A549 (cell line): ENCODE measurements at regions of chr6 and their contacts with region 1.

Region 1: DNA sequence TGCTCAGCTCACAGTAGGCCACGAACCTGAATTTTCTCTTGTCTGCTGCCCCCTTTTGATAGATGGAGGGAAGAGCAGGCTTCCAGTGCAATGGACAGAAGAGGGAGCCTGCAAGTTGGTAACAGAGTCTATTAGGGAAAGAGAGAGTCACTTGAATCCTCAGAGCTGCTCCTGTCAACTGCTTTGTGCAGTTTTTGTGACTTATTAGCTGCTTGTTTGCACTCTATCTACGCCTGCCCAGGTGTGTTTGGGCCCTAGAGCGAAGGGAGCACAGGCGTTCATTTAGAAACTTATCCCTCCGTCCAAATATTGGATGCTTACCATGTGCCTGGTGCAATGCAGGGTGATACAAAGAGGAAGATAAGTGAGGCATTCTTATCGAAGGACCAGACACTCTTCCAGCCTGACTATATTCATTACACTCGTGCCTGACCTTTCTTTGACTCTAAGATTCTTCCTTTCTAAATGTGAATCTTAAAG is 11.6 kb upstream of the SLC2A12 start:
- DNase-seq: peak; percentile 69 to 72
- ATAC-seq: peak; percentile 95 to 97
- H3K4me3 ChIP-seq: no peak overlapping the region
- H3K27ac ChIP-seq: 0 out of 6 replicates have a peak overlapping the region, but pooled peaks of 1 of the 2 experiments have one; percentile 9
- H3K4me1 ChIP-seq: peaks cover 20% of the 10 kb centered on the region
- CTCF ChIP-seq: peak; percentile 69
- EP300 ChIP-seq: no peak
- POLR2A ChIP-seq: no peak
- RAD21 ChIP-seq: peak; percentile 78 to 82

Region 2: DNA sequence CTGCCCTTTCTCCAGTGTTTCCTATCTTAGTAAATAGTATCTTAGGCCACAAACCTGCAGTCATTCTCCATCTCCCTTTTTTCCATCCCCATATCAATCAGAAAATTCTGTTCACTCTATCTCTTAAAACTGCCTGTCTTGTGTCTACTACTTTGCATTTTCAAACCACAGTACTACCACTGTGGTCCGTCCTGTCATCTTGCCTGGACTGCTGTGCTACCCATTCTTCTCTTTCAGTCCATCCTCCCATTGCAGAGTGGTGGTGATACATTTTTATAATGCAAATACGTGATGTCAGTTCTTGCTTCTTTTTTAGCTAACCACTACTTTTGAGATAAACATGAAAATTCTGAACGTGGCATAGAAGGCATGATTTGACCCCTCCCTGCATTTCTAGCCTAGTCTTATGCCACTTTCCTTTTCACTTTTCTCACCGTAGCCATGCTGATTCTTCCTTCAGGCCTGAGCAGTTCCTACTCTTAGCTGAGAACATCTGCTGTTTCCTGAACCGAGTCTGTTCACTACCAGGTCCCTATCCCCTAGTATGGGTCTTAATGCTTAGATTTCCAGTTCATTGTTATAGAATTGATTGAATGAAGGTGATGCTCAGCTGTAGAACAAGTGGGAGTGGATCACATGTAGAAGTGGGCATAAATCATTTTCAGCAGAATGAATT is 97.2 kb before region 1 on chr6:
- CTCF ChIA-PET with region 1: interaction called, 18 read pairs
- POLR2A ChIA-PET with region 1: no interaction called
- DNase-seq: no peak
- ATAC-seq: no peak
- H3K4me3 ChIP-seq: no peak overlapping the region
- H3K27ac ChIP-seq: no peak overlapping the region
- H3K4me1 ChIP-seq: peaks cover 28% of the 10 kb centered on the region
- CTCF ChIP-seq: no peak
- EP300 ChIP-seq: no peak
- POLR2A ChIP-seq: no peak
- RAD21 ChIP-seq: no peak

Region 3: GRCh38 chr6:133983099-133983939 is 80.7 kb before region 1 on chr6:
- CTCF ChIA-PET with region 1: interaction called, 128 read pairs
- POLR2A ChIA-PET with region 1: no interaction called
- DNase-seq: no peak
- ATAC-seq: peak in 1 of 2 experiments; percentile 50; a peak in 2 of 6 replicates
- H3K4me3 ChIP-seq: no peak overlapping the region
- H3K27ac ChIP-seq: no peak overlapping the region
- H3K4me1 ChIP-seq: peaks cover 26% of the 10 kb centered on the region
- CTCF ChIP-seq: no peak
- EP300 ChIP-seq: no peak
- POLR2A ChIP-seq: no peak
- RAD21 ChIP-seq: no peak

Region 4: GRCh38 chr6:134074151-134075055 is 10.4 kb after region 1 on chr6:
- CTCF ChIA-PET with region 1: interaction called, 18 read pairs
- POLR2A ChIA-PET with region 1: no interaction called
- DNase-seq: no peak
- ATAC-seq: no peak
- H3K4me3 ChIP-seq: no peak overlapping the region
- H3K27ac ChIP-seq: no peak overlapping the region
- H3K4me1 ChIP-seq: no peaks in the 10 kb centered on the region
- CTCF ChIP-seq: no peak
- EP300 ChIP-seq: no peak
- POLR2A ChIP-seq: no peak
- RAD21 ChIP-seq: no peak

Region 5: DNA sequence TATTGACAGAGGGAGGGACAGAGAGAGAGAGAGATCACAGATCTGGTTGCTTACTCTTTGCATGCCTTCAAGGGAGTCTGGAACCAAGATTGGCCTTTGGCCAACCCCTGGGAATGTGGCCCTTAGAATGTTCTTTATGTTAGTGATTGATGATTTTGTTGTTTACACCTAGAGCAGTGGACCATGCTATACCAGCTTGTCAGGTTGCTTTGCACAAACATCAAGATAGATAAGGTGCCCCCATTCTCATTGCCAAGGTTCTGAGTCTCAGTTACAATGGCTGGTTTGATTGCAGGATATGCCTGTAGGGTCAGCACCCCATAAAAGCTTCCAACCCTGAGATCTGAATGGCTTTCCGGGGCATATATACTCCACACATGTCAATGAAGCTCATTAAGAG is 41.9 kb after region 1 on chr6:
- CTCF ChIA-PET with region 1: interaction called, 14 read pairs
- POLR2A ChIA-PET with region 1: no interaction called
- DNase-seq: no peak
- ATAC-seq: no peak
- H3K4me3 ChIP-seq: no peak overlapping the region
- H3K27ac ChIP-seq: peak overlapping the region in 1 of 2 experiments; percentile 38; a peak in 1 of 6 replicates
- H3K4me1 ChIP-seq: peaks cover 27% of the 10 kb centered on the region
- CTCF ChIP-seq: no peak
- EP300 ChIP-seq: no peak
- POLR2A ChIP-seq: no peak
- RAD21 ChIP-seq: no peak